ENCODE measurements at regions of chr6 and their contacts with region 1.

Region 1: GRCh38 chr6:117602151-117602898 is at the start of gene GOPC:
- DNase-seq: peak; percentile 94
- H3K4me3 Mint-ChIP-seq: peak within 1 kb of the TSS; percentile 99
- H3K27ac Mint-ChIP-seq: peak within 1 kb of the TSS; percentile 100
- H3K4me1 Mint-ChIP-seq: peaks cover 44% of the 10 kb centered on the region
- H3K27me3 Mint-ChIP-seq: peaks cover 2% of the 10 kb centered on the region
- total RNA-seq, gene GOPC: 23.6 and 24.3 TPM in 2 replicates

Region 2: GRCh38 chr6:116253505-116254296 is 1348.6 kb before region 1 on chr6 and contains the start of gene TSPYL4:
- intact Hi-C with region 1: loop called (anchors 10 kb)
- DNase-seq: peak; percentile 88
- H3K4me3 Mint-ChIP-seq: no peak within 1 kb of the TSS
- H3K27ac Mint-ChIP-seq: no peak within 1 kb of the TSS
- H3K4me1 Mint-ChIP-seq: no peaks in the 10 kb centered on the region
- H3K27me3 Mint-ChIP-seq: no peaks in the 10 kb centered on the region
- total RNA-seq, gene TSPYL4: 20.4 and 21.4 TPM in 2 replicates

Region 3: GRCh38 chr6:116680975-116681808 is 921.1 kb before region 1 on chr6 and contains the start of gene KPNA5:
- intact Hi-C with region 1: loop called (anchors 5 kb)
- DNase-seq: peak; percentile 84
- H3K4me3 Mint-ChIP-seq: peak within 1 kb of the TSS; percentile 97
- H3K27ac Mint-ChIP-seq: peak within 1 kb of the TSS; percentile 97
- H3K4me1 Mint-ChIP-seq: peaks cover 25% of the 10 kb centered on the region
- H3K27me3 Mint-ChIP-seq: no peaks in the 10 kb centered on the region
- total RNA-seq, gene KPNA5: 6.1 and 7.6 TPM in 2 replicates

Region 4: GRCh38 chr6:117449549-117450439 is 152.5 kb before region 1 on chr6:
- intact Hi-C with region 1: loop called (anchors 1 kb)
- DNase-seq: peak; percentile 31
- H3K4me3 Mint-ChIP-seq: no peak overlapping the region
- H3K27ac Mint-ChIP-seq: no peak overlapping the region
- H3K4me1 Mint-ChIP-seq: no peaks in the 10 kb centered on the region
- H3K27me3 Mint-ChIP-seq: peaks cover 40% of the 10 kb centered on the region

Region 5: DNA sequence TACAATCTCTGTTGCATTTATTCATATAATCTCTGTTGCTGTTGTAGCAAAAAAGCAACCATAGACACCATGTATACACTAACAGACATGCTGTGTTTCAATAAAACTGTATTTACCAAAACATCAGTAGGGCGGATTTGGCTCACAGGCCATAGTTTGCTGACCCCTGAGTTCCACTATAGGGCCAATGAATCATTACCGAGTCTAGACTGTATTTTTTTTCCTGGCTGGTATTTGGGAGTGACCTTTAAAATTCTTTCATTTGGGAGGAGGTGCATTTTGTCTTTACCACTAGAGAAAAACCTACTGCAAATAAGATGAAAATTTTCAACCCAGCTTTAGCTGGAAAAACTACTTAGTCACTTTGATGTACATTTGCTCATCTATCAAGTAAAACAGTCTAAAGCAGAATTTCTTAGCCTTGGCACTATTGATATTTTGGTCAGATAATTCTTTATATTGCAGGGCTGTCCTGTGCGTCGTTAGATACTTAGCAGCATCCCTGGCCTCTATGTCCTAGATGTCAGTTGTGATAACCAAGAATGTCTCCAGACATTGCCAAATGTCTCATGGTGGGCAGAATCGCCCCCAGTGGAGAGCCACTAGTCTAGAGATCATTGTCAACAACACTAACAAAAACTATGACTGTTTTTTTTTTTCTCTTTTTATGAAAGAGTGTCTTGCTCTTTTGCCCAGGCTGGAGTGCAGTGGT is 80.4 kb before region 1 on chr6:
- intact Hi-C with region 1: no loop called
- DNase-seq: no peak
- H3K4me3 Mint-ChIP-seq: no peak overlapping the region
- H3K27ac Mint-ChIP-seq: no peak overlapping the region
- H3K4me1 Mint-ChIP-seq: no peaks in the 10 kb centered on the region
- H3K27me3 Mint-ChIP-seq: peaks cover 5% of the 10 kb centered on the region

Region 6: GRCh38 chr6:117568831-117569410 is 33.4 kb before region 1 on chr6:
- intact Hi-C with region 1: loop called (anchors 1 kb)
- DNase-seq: no peak
- H3K4me3 Mint-ChIP-seq: no peak overlapping the region
- H3K27ac Mint-ChIP-seq: no peak overlapping the region
- H3K4me1 Mint-ChIP-seq: peaks cover 4% of the 10 kb centered on the region
- H3K27me3 Mint-ChIP-seq: no peaks in the 10 kb centered on the region

Region 7: DNA sequence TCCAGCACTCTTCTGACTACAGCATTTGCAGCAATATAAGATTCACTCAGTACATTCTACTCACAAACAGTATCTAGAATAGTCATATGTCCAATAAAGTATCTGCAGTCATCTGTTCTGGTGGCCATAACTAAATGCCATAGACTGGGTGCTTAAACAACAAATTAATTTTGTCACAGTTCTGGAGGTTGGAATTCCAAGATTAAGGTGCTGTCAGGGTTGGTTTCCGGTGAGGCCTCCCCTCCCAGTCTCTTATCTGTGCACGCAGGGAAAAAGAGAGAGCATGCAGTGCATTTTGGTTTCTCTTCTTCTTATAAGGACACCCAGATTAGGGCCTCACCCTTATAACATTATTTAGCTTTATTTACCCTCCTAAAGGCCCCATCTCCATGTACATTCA is 51.6 kb after region 1 on chr6:
- intact Hi-C with region 1: no loop called
- DNase-seq: no peak
- H3K4me3 Mint-ChIP-seq: no peak overlapping the region
- H3K27ac Mint-ChIP-seq: no peak overlapping the region
- H3K4me1 Mint-ChIP-seq: no peaks in the 10 kb centered on the region
- H3K27me3 Mint-ChIP-seq: no peaks in the 10 kb centered on the region

Region 8: GRCh38 chr6:118198746-118199145 is 596.4 kb after region 1 on chr6:
- intact Hi-C with region 1: no loop called
- DNase-seq: no peak
- H3K4me3 Mint-ChIP-seq: no peak overlapping the region
- H3K27ac Mint-ChIP-seq: no peak overlapping the region
- H3K4me1 Mint-ChIP-seq: no peaks in the 10 kb centered on the region
- H3K27me3 Mint-ChIP-seq: peaks cover 5% of the 10 kb centered on the region

Region 9: DNA sequence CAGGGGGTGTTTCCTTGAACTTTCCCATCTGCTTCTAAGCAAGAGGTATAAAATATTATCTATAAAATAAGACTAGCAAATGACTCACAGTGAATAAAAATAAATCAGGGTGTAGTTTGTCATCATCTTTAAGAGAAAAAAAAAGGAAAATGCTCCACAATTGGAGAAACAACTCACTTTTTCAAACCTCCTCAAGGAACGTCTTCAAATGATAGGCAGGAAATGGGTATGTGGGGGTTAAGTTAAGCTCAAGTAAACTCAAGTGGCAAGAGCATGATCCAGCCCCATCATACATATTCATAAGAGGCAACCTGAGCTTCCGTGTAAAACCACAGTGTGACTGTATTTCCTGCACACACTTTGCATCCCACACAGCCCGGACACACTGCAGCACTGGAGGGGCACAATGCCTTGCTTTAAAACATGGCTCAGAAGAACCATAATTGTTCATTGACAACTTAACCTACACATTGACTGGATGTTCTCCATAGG is 1107.6 kb after region 1 on chr6:
- intact Hi-C with region 1: loop called (anchors 5 kb)
- DNase-seq: peak; percentile 77
- H3K4me3 Mint-ChIP-seq: peak overlapping the region; percentile 96
- H3K27ac Mint-ChIP-seq: peak overlapping the region; percentile 99
- H3K4me1 Mint-ChIP-seq: peaks cover 94% of the 10 kb centered on the region
- H3K27me3 Mint-ChIP-seq: peaks cover under 1% of the 10 kb centered on the region

Measured in activated T-helper 1 cell treated with anti-CD3 and anti-CD28 coated beads, Interleukin-12 subunit alpha, Interleukin-12 subunit beta, Interleukin-2, Interleukin-4 antibody, amounts not matched to agents 30 ng/mL and 10 ng/mL and 1 ng/mL, durations not matched to agents 14 hours and 24 hours and 36 hours (primary cell).